ENCODE measurements at regions of chr4 and their contacts with region 1.

Region 1: GRCh38 chr4:139295206-139295941 is 5.9 kb upstream of the NAA15 start:
- DNase-seq: peak; percentile 97
- ATAC-seq: peak; percentile 98
- H3K4me3 Mint-ChIP-seq: peak overlapping the region; percentile 94
- H3K27ac Mint-ChIP-seq: peak overlapping the region; percentile 96
- H3K4me1 Mint-ChIP-seq: peaks cover 40% of the 10 kb centered on the region
- H3K27me3 Mint-ChIP-seq: no peaks in the 10 kb centered on the region

Region 2: DNA sequence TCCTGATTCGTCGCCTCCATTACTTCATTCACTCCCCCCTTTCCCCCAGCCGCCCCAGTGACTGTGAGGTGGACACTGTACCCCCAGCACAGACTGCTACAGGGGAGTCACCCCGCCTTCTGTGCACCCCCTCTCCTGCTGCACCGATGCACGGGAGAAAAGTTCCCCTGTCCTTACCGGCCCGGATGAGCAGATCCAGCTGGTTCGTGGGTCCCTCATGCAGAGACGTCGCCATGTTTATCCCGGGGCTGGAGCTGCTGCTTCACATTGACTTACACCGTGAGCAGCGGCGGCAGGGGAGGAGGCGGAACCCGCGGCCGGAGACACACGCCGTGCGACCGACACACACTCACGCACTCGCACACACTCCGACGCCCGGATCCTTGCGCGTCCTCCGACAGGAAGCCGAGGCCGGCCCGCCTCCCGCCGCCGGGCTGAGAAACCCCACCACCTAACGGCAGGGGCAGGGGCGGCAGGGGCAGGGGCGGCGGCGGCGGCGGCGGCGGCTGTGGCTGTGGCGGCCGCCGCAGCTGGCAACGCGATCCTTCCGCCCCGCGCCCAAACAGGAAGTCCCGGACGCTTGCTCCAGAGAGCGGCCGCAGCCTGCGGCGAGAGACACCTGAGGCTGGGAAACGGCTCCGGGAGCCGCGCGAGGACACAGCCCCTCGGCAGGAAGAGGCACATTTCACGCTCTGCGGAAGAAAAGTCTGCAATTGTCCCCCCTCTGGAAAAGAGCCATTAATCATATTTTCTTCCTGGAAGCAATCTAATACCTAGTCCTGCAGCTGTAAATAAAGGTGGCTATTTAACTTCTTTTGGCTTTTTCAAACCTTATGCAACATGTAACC is 211.2 kb before region 1 on chr4:
- CTCF ChIA-PET with region 1: interaction called, 10 read pairs
- POLR2A ChIA-PET with region 1: interaction called, 24 read pairs
- DNase-seq: peak; percentile 85
- ATAC-seq: peak; percentile 66
- H3K4me3 Mint-ChIP-seq: peak overlapping the region; percentile 99
- H3K27ac Mint-ChIP-seq: peak overlapping the region; percentile 99
- H3K4me1 Mint-ChIP-seq: peaks cover 33% of the 10 kb centered on the region
- H3K27me3 Mint-ChIP-seq: no peaks in the 10 kb centered on the region

Region 3: DNA sequence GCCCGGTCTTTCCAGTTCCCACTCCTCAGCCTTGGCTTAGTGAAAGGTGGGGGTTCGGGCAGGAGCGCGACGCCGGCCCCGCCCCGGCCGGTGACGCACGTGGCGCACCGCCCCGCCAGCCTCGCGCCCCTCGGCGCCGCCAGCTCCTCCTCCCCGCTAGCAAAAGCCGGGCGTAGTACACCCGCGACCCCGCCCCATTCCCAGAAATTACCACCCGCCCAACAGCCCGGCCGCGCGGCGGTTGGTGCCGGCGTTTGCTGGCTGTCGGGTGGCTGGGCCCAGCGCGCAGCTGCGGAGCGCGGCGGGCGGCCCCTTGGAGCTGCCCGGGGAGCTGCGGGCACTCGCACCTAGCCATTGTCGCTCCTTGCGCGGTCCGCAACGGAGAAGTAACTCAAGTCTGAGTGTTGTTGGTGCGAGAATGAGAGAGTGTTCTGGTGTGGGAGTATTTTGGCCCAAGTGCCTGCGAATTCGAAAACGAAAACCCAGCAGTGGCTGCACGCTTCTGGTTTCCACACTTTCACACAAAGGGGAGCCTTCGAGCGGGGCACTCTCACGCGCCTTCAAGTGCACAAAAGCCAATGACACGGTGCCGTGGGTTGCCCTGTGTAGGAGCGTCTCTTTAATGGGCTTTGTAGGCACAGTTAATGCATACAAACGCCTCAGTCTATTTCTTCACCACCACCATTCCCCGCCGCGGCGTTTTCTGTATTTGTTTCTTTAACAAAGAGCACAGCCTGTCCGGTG is 117.3 kb before region 1 on chr4:
- CTCF ChIA-PET with region 1: interaction called, 10 read pairs
- POLR2A ChIA-PET with region 1: interaction called, 28 read pairs
- DNase-seq: peak; percentile 94
- ATAC-seq: peak; percentile 78
- H3K4me3 Mint-ChIP-seq: peak overlapping the region; percentile 82
- H3K27ac Mint-ChIP-seq: peak overlapping the region; percentile 89
- H3K4me1 Mint-ChIP-seq: peaks cover 13% of the 10 kb centered on the region
- H3K27me3 Mint-ChIP-seq: peaks cover 32% of the 10 kb centered on the region

Region 4: GRCh38 chr4:139229534-139230039 is 65.8 kb before region 1 on chr4:
- CTCF ChIA-PET with region 1: interaction called, 28 read pairs
- POLR2A ChIA-PET with region 1: interaction called, 3 read pairs
- DNase-seq: no peak
- ATAC-seq: no peak
- H3K4me3 Mint-ChIP-seq: no peak overlapping the region
- H3K27ac Mint-ChIP-seq: no peak overlapping the region
- H3K4me1 Mint-ChIP-seq: peaks cover 2% of the 10 kb centered on the region
- H3K27me3 Mint-ChIP-seq: no peaks in the 10 kb centered on the region

Region 5: DNA sequence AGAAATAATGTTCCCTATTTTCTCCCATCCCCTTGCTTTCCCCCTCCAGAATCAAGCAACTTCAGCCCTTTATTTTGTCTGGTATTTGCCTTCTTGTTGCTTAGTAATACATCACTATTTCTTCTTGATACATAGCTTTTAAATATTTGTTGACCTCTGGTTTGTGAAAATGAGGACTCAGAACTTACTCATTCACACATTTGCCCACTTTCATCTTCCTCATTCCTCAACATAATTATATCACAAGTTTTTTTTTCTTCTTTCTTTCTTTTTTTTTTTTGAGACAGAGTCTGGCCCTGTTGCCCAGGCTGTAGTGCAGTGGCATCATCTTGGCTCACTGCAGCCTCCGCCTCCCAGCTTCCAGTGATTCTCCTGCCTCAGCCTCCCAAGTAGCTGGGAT is 35.8 kb after region 1 on chr4:
- CTCF ChIA-PET with region 1: interaction called, 10 read pairs
- POLR2A ChIA-PET with region 1: no interaction called
- DNase-seq: no peak
- ATAC-seq: no peak
- H3K4me3 Mint-ChIP-seq: no peak overlapping the region
- H3K27ac Mint-ChIP-seq: no peak overlapping the region
- H3K4me1 Mint-ChIP-seq: peaks cover 18% of the 10 kb centered on the region
- H3K27me3 Mint-ChIP-seq: no peaks in the 10 kb centered on the region